GM13977 (cell line): ENCODE measurements at regions of chr10 and their contacts with region 1.

Region 1: DNA sequence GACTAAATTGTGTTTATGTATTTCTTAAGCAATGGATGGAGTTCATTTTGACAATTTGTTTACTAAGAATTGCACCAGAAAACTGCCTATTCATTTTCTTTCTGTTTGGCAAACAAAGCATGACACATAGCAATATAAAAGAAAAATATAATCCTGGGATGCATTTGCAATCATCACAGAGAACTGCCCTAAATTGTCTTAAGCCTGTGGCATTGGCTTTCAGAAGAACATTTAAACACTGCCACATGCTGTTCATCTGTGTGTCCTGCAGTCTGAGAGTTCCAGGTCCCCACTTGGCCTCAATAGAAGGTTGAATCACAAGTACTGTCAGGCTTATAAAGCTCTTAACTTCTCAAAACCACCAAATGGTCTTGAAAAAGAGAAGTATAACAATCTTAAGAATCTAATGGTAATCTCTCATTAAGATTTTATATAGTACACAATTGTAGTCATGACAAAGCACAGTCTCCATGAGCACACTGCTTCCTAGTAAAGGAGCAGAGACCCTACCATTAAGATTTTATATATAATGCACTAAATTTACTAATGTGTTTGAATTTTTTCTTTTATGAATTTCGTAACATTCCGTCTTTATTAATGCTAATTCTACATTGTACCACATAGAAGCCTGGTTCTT is 29.9 kb downstream of the RNLS start:
- DNase-seq: peak; percentile 43
- CTCF ChIP-seq: peak; percentile 88

Region 2: DNA sequence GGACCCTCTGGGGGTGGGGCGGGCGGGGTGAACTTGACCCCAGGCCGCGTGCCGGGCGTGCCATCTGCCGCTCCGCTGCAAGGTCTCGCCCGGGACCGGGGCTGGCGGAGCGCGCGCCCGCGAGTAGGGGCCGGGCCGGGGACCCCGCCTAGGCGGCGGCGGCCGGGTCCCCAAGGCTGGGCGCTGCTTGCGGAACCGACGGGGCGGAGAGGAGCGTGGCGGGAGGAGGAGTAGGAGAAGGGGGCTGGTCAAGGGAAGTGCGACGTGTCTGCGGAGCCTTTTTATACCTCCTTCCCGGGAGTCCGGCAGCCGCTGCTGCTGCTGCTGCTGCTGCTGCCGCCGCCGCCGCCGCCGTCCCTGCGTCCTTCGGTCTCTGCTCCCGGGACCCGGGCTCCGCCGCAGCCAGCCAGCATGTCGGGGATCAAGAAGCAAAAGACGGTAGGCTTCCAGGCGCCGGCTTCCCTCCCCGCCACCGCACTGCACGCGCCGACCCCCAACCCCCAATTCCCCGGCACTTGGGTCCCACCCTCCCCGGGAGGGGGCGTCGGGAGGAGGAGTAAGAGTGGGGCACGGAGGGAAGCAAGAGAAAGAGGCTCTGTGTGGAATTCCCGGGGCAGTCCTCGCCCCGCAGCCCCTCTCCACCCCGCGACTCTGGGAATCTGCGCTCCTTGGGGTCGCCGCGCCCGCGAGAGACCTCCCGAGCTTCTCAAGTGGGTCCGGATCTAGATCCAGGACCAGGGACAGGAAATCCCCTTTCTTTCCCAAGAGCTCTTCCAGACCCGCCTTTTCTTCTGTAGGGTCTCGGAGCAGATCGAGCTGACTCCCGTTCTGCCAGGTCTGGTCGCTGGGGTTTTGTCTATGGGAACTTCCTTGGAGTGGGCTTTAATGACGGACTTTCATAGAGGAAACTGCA is 893.4 kb before region 1 on chr10 and contains the start of gene PAPSS2:
- in situ Hi-C with region 1: loop called (anchors 25 kb)
- DNase-seq: peak; percentile 54
- CTCF ChIP-seq: no peak

Region 3: DNA sequence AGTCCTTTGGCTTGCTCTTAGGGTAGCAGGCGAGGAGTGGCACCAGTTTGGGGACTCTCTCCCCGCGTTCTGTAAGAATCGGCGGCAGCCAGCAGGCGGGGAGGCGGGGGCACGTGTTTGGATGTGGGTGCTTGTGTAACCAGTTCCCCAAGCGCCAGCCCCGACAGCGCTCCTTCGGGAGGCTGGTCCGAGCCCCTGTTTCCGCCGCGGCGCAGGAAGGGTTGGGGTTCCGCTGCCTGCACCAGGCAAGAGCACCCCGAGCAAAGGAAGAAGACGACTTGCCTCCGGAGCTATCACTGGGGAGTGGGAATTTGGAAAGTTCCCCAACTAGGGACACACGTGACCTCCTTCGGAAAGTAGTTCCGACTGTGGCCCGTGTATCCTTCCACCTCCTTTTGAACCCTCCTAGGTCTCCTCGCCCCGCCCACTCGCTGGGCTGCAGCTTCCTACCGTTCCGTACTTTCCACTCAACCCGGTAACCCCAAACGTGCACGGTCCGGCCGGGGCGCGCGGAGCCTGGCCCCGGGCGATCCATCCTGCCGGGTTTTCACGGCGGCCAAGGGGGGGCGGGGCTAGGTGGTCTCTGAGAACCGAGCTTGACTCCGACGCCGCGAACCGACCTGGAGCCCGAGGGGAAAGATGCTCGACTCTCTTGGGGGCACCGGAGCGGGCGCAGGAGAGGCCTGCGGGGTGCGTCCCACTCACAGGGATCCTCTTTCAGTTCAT is 691.1 kb before region 1 on chr10:
- in situ Hi-C with region 1: loop called (anchors 5 kb)
- DNase-seq: peak; percentile 91
- CTCF ChIP-seq: no peak

Region 4: GRCh38 chr10:88437411-88437810 is 115.8 kb before region 1 on chr10:
- in situ Hi-C with region 1: no loop called
- DNase-seq: no peak
- CTCF ChIP-seq: no peak

Region 5: GRCh38 chr10:88810196-88810961 is 257.1 kb after region 1 on chr10:
- in situ Hi-C with region 1: loop called (anchors 25 kb)
- DNase-seq: peak; percentile 27
- CTCF ChIP-seq: peak; percentile 70